Activated CD8-positive, alpha-beta T cell treated with anti-CD3 and anti-CD28 coated beads for 36 hours (primary cell): ENCODE measurements at regions of chr1 and their contacts with region 1.

Region 1: DNA sequence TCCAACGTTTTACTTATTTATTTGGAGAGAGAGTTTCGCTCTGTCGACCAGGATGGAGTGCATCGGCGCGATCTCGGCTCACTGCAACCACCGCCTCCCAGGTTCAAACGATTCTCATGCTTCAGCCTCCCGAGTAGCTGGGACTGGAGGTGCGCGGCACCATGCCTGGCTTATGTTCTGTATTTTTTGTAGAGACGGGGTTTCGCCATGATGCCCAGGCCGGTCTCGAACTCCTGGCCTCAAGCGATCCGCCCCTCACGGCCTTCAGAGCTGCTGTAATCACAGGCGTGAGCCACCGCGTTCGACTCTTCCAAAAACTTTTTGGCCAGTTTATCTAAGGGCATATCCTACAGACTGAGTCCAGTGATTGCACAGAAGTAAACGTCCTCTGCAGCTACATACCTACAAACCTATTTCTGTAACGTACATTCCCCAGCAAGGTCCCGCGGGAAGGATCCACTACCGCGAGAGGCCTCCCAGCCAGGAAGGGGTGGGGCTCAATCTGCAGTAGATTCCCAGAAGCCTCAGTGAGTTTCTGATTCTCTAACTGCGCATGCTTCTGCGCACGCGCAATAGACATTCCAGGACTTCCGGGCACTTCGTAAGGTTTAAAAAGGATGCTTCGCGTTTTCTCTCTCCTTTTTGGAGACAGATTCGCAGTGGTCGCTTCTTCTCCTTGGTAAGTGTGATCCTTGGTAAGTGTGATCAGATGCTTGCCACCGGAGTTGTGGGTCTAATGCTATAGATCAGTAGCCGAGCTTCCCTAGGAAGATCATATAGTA is at the start of gene RCC1:
- DNase-seq: peak; percentile 98
- ATAC-seq: peak; percentile 88
- H3K4me3 Mint-ChIP-seq: peak within 1 kb of the TSS; percentile 94
- H3K27ac Mint-ChIP-seq: peak within 1 kb of the TSS; percentile 95
- H3K4me1 Mint-ChIP-seq: peaks cover 26% of the 10 kb centered on the region
- H3K27me3 Mint-ChIP-seq: peaks cover 1% of the 10 kb centered on the region
- CTCF ChIP-seq: no peak
- total RNA-seq, gene RCC1: 108 to 113 TPM

Region 2: GRCh38 chr1:28259307-28260167 is 246.1 kb before region 1 on chr1 and contains the start of gene SESN2:
- CTCF ChIA-PET with region 1: no interaction called
- POLR2A ChIA-PET with region 1: interaction called, 34 read pairs
- intact Hi-C with region 1: no loop called
- DNase-seq: peak; percentile 100
- ATAC-seq: peak; percentile 94
- H3K4me3 Mint-ChIP-seq: peak within 1 kb of the TSS; percentile 83
- H3K27ac Mint-ChIP-seq: peak within 1 kb of the TSS; percentile 96
- H3K4me1 Mint-ChIP-seq: peaks cover 38% of the 10 kb centered on the region
- H3K27me3 Mint-ChIP-seq: no peaks in the 10 kb centered on the region
- CTCF ChIP-seq: no peak
- total RNA-seq, gene SESN2: 26.0 to 27.4 TPM

Region 3: DNA sequence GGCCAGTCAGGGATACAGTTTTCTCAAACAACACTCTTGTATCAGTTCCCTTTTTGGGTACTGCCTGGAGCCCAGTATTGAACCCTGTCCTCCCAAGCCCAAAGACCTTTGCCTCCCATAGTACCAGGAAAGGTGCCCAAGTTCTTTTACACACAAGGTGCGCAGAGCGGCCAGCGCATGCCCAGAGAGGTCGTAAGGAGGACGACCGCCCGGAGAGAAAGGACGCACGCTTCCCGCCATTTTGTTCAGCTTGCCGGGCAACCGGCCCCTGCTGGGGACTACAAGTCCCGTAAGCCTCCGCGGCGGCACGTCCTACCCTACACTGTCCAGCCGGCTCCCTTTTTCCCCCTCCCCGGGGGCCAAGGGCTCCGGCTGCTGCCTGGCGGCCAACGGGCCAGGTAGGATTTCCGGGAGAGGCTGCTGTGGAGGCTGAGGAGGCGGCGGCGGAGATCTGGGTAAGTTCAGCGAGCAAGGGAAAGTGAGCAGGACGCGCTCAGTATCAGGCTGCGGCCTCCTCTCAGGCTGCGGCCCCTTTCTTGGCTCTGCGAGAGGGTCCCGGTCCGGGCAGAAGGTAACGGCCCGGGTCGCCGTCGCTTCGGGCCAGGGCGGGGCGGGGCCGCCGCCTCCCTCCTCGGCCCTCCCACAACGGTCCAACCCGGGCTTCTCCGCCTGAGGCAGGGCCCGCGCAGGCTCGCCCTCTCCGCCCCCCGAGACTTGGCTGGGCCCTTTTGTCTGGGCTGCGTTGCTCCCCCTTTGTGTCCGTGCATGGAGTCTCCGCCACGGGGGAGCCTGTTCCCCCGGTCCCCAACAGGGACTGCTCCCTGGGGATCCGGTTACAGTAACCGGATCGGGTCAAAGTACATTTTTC is 136.0 kb before region 1 on chr1 and contains the start of gene PHACTR4:
- CTCF ChIA-PET with region 1: no interaction called
- POLR2A ChIA-PET with region 1: interaction called, 28 read pairs
- intact Hi-C with region 1: no loop called
- DNase-seq: peak; percentile 92
- ATAC-seq: peak; percentile 93
- H3K4me3 Mint-ChIP-seq: peak within 1 kb of the TSS; percentile 97
- H3K27ac Mint-ChIP-seq: peak within 1 kb of the TSS; percentile 94
- H3K4me1 Mint-ChIP-seq: peaks cover 36% of the 10 kb centered on the region
- H3K27me3 Mint-ChIP-seq: no peaks in the 10 kb centered on the region
- CTCF ChIP-seq: no peak
- total RNA-seq, gene PHACTR4: 20.3 to 20.9 TPM

Region 4: DNA sequence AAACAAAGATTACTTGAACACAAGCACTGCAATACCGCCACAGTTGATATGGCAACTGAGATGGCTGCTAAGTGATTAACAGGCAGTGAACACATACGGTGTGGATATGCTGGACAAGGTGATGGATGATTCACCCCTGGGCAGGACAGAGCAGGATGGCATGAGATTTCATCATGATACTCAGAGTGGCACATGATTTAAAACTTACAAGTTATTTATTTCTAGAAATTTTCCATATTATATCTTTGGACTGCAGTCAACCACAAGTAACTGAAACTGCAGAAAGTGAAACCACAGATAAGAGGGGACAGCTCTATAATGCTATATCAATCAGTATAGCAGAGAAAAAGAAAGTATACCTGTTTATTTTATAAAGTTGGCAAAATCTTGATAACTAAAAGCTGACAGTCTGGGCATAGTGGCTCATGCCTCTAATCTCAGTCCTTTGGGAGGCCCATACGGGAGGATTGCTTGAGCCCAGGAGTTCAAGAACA is 88.1 kb before region 1 on chr1:
- CTCF ChIA-PET with region 1: interaction called, 3 read pairs
- POLR2A ChIA-PET with region 1: interaction called, 7 read pairs
- intact Hi-C with region 1: loop called (anchors 10 kb)
- DNase-seq: peak; percentile 56
- ATAC-seq: peak; percentile 95
- H3K4me3 Mint-ChIP-seq: peak overlapping the region; percentile 23
- H3K27ac Mint-ChIP-seq: peak overlapping the region; percentile 70
- H3K4me1 Mint-ChIP-seq: peaks cover 17% of the 10 kb centered on the region
- H3K27me3 Mint-ChIP-seq: no peaks in the 10 kb centered on the region
- CTCF ChIP-seq: no peak

Region 5: DNA sequence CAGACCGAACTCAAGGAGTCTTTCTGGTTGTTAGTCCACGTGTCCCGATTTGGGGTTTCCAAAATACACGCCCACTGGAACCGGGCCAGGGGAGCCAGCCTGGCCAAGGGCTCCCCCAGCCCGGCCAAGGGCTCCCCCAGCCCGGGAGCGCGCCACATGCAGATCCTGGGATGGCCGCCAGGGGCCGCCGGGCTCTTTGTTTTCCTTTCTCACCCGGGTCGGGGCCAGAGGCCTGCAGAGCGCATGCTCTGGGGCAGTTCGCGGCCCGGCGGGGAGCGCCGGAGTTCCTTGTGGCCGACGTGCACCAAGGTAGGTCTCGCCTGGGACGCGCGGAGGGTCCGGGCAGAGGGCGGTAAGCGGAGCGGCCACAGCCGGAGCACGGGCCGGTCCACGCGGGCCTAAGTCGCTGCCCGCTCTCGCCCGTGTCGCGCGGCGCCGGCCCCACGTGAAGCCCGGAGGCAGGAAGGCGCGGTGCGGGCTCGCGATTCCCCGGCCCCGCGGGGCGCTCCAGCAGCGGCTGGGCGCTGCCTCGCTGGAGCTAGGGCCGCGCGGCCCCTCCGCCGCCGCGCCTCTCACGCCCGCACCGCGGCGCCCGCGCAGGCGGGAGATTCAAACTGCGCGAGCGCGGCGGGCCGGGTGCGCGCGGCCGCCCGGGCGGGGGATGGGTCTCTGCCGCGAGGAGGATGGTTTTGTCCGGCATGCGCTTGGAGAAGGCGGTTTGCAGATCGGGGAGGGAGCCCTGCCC is 12.6 kb after region 1 on chr1:
- CTCF ChIA-PET with region 1: interaction called, 7 read pairs
- POLR2A ChIA-PET with region 1: interaction called, 79 read pairs
- intact Hi-C with region 1: no loop called
- DNase-seq: peak; percentile 93
- ATAC-seq: peak; percentile 81
- H3K4me3 Mint-ChIP-seq: peak overlapping the region; percentile 81
- H3K27ac Mint-ChIP-seq: peak overlapping the region; percentile 91
- H3K4me1 Mint-ChIP-seq: peaks cover 29% of the 10 kb centered on the region
- H3K27me3 Mint-ChIP-seq: no peaks in the 10 kb centered on the region
- CTCF ChIP-seq: peak; percentile 99

Region 6: DNA sequence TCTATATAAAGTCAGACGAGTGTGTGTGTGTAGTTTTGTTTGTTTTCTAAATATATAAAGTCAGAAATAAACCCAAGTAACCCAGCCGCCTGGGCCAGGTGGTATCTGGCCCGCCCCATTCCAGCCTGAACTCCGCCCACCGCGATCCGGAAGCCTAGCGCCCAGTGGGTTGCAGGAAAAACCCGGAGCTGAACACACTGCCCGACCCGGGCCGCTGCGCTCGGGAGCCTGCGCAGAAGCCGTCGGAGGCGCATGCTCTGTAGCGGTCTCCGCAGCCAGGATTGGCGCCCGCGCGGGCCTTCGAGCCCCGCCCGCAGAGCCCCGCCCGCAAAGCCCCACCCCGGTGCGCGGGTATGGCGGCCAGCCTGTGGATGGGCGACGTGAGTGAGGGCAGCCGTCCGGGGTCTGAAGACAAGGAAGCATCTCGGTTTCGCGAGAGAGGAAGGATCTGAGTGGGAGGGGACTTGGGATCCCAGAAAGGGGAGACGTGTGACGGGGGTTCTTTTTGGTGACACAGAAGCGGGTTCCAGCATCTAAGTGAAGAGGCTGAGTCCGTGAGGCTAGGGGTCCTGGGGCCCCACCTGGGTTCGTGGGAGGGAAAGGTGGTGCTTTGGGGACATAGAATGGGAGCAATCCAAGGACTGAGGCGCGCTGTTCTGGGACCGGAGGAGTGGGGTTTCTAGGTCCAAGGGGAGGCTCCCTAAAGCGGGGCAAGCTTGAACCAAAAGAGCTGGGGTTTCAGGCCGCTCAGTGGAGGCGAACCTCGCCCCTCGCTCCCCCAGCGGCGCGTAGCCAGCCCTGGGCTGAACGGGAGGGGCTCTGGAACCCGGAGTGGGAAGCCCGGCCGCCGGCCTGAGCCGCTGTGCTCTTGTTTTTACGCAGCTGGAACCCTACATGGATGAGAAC is 47.4 kb after region 1 on chr1 and contains the start of gene TRNAU1AP:
- CTCF ChIA-PET with region 1: no interaction called
- POLR2A ChIA-PET with region 1: interaction called, 57 read pairs
- intact Hi-C with region 1: no loop called
- DNase-seq: peak; percentile 98
- ATAC-seq: peak; percentile 97
- H3K4me3 Mint-ChIP-seq: peak within 1 kb of the TSS; percentile 95
- H3K27ac Mint-ChIP-seq: peak within 1 kb of the TSS; percentile 98
- H3K4me1 Mint-ChIP-seq: peaks cover 13% of the 10 kb centered on the region
- H3K27me3 Mint-ChIP-seq: no peaks in the 10 kb centered on the region
- CTCF ChIP-seq: no peak
- total RNA-seq, gene TRNAU1AP: 42.5 to 47.8 TPM

Region 7: GRCh38 chr1:28642847-28643635 is 137.4 kb after region 1 on chr1 and contains the start of gene TAF12:
- CTCF ChIA-PET with region 1: no interaction called
- POLR2A ChIA-PET with region 1: interaction called, 135 read pairs
- intact Hi-C with region 1: no loop called
- DNase-seq: peak; percentile 91
- ATAC-seq: peak; percentile 84
- H3K4me3 Mint-ChIP-seq: peak within 1 kb of the TSS; percentile 98
- H3K27ac Mint-ChIP-seq: peak within 1 kb of the TSS; percentile 97
- H3K4me1 Mint-ChIP-seq: peaks cover 44% of the 10 kb centered on the region
- H3K27me3 Mint-ChIP-seq: no peaks in the 10 kb centered on the region
- CTCF ChIP-seq: peak; percentile 42
- total RNA-seq, gene TAF12: 21.3 to 23.0 TPM